ENCODE measurements at regions of chrX and their contacts with region 1.

Region 1: GRCh38 chrX:65674204-65674893 is 6.9 kb downstream of the MSN start:
- DNase-seq: peak; percentile 73
- H3K4me3 Mint-ChIP-seq: peak overlapping the region; percentile 97
- H3K27ac Mint-ChIP-seq: peak overlapping the region; percentile 88
- H3K4me1 Mint-ChIP-seq: peaks cover 58% of the 10 kb centered on the region
- H3K27me3 Mint-ChIP-seq: no peaks in the 10 kb centered on the region

Region 2: GRCh38 chrX:65630771-65631170 is 43.6 kb before region 1 on chrX:
- intact Hi-C with region 1: no loop called
- DNase-seq: no peak
- H3K4me3 Mint-ChIP-seq: no peak overlapping the region
- H3K27ac Mint-ChIP-seq: no peak overlapping the region
- H3K4me1 Mint-ChIP-seq: no peaks in the 10 kb centered on the region
- H3K27me3 Mint-ChIP-seq: no peaks in the 10 kb centered on the region

Region 3: DNA sequence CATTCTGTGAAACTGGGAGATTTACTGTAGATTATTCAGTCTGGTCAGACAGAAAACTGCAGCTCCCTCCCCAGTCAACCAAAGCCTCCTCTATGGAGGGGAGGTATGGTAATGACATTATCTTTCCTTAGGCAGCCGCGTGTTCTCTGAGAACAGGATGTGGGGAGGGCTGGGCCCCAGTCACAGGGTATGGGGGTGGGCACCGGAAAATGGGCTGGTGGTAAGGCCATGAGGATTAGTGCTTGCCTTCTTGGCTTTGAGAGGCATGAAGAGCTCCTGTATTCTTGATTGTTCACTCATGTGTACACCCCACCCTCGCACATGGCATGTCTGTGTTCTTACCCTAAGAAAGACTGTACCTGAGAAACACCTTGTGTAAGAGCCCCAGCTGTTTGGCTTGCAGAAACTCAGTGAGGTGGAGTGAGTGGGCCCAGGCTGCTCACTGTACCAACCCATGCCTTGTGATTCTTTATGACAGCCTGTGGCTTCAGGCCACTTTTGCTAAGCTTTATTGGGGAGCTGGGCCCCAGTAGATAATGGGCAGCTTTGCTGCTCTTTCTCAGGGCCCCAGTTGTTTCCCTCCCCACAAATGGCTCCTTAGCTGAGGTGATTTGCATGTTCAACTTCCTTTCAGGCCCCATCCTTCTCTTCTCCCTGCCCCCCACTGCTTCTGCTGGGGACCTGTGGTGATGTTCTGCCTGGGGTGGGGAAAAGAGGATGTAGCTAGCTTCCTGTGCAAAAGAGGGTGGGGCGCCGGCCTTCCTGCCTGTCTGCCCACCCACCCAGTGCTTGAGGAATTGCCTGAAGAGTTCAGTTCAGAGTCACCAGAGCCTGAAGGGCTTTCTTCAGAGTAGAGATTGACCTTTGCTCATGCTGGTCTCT is 23.8 kb after region 1 on chrX:
- intact Hi-C with region 1: loop called (anchors 1 kb)
- DNase-seq: peak; percentile 91
- H3K4me3 Mint-ChIP-seq: peak overlapping the region; percentile 77
- H3K27ac Mint-ChIP-seq: peak overlapping the region; percentile 96
- H3K4me1 Mint-ChIP-seq: peaks cover 60% of the 10 kb centered on the region
- H3K27me3 Mint-ChIP-seq: no peaks in the 10 kb centered on the region